ENCODE measurements at regions of chr4 and their contacts with region 1.

Region 1: GRCh38 chr4:4334798-4335520 is 44.9 kb downstream of the ZBTB49 start:
- DNase-seq: no peak
- H3K4me3 ChIP-seq: no peak overlapping the region
- H3K27ac ChIP-seq: no peak overlapping the region
- H3K27me3 ChIP-seq: peaks cover 7% of the 10 kb centered on the region
- CTCF ChIP-seq: peak; percentile 81

Region 2: DNA sequence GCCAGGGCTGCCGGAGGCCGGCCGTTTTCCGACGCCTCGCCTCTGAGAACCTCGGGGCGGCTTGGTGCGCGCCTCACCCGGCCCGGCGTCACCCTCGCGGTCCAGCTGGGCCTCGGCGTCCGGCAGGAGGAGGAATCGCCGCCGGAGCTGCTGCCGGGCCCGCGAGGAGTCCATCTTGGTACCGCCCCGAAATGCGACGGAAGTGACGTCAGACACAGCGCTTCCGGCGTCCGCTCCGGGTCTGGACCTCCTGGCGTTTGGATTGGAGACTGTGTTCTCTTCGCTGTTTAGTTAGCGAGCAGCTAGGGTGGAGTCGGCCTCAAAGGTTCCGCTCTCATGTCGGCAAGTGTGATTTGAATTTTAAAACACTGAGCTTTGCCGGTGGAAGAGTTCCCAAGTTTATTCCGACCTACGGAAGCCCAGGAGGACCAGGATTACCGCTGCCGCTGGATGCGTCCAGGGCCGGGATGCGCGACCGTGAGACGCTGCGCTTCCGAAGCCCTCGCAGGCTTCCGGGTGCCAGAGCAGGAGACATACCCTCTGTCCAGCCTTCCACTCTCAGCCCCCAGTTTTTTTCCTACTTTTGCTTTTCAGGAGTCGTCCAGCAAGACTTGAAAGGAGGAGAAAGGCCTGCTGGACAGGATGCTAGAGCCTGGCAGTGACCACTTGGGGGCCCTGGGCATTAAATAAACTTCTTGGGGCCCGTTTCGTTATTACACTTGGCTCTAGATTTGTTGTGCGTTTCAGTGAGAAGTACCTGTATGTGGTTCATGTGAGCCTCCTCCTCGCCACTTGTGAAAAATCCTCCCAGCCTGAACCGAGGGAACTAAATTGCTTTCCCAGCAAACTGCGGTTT is 86.7 kb before region 1 on chr4 and contains the start of gene TMEM128:
- CTCF ChIA-PET with region 1: interaction called, 14 read pairs
- POLR2A ChIA-PET with region 1: no interaction called
- DNase-seq: peak; percentile 83
- H3K4me3 ChIP-seq: peak within 1 kb of the TSS; percentile 90
- H3K27ac ChIP-seq: peak within 1 kb of the TSS; percentile 96
- H3K27me3 ChIP-seq: peaks cover 3% of the 10 kb centered on the region
- CTCF ChIP-seq: peak; percentile 34
- polyA plus RNA-seq, gene TMEM128: 32.3 and 44.0 TPM in 2 replicates

Measured in AG04450 (cell line).